HAP-1 (cell line): ENCODE measurements at regions of chr17 and their contacts with region 1.

Region 1: GRCh38 chr17:50547035-50547735 is at the start of gene SPATA20:
- DNase-seq: peak; percentile 84 to 95
- H3K4me3 ChIP-seq: peak within 1 kb of the TSS; percentile 44
- H3K4me1 ChIP-seq: peaks cover 13% of the 10 kb centered on the region
- H3K27me3 ChIP-seq: no peaks in the 10 kb centered on the region

Region 2: DNA sequence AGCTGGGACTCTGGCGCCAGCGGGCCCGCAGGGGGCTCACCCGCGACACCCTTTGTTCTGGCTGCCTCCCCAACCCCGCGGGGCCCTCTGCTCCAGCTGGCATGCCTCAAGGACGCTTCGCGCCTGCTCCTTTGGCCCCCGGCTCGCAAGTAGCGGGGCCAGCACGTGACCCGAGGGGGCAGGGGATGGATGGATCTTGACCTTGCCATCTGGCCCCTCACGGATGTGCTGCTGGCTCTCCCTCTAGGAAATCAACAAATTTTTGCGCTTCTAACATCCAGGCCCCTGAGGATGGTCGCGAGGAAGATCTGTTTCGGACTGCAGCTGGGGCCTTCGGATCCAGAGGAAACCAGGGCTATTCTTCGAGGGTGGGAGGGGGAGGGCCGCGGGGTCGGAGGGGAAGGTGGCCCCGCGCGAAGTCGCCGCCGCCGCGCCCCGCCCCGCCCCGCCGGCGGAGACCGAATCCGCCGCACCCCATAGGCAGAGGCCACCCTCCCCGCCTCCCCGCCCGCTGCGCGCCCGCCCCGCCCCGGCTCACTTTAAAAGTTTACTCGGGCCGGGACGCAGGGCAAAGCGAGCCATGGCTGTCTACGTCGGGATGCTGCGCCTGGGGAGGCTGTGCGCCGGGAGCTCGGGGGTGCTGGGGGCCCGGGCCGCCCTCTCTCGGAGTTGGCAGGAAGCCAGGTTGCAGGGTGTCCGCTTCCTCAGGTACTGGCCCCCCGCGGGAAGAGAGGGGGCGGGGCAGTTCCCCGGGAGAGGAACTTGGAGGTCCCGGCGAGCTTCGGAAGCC is 121.3 kb before region 1 on chr17 and contains the start of gene ACSF2:
- in situ Hi-C with region 1: no loop called
- DNase-seq: peak; percentile 56 to 84
- H3K4me3 ChIP-seq: peak within 1 kb of the TSS; percentile 62
- H3K4me1 ChIP-seq: peaks cover 11% of the 10 kb centered on the region; the same call in 1 of the 2 replicates
- H3K27me3 ChIP-seq: no peaks in the 10 kb centered on the region

Region 3: DNA sequence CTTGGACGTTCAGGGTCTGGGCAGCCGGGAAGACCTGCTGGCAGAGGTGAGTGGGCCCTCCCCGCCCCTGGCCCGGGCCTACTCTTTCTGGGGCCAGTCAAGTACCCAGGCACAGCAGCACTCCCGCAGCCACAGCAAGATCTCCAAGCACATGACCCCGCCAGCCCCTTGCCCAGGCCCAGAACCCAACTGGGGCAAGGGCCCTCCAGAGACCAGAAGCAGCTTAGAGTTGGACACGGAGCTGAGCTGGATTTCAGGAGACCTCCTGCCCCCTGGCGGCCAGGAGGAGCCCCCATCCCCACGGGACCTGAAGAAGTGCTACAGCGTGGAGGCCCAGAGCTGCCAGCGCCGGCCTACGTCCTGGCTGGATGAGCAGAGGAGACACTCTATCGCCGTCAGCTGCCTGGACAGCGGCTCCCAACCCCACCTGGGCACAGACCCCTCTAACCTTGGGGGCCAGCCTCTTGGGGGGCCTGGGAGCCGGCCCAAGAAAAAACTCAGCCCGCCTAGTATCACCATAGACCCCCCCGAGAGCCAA is 78.9 kb after region 1 on chr17:
- in situ Hi-C with region 1: loop called (anchors 5 kb)
- DNase-seq: peak; percentile 76 to 89
- H3K4me3 ChIP-seq: no peak overlapping the region
- H3K4me1 ChIP-seq: no peaks in the 10 kb centered on the region
- H3K27me3 ChIP-seq: peaks cover 4% of the 10 kb centered on the region

Region 4: DNA sequence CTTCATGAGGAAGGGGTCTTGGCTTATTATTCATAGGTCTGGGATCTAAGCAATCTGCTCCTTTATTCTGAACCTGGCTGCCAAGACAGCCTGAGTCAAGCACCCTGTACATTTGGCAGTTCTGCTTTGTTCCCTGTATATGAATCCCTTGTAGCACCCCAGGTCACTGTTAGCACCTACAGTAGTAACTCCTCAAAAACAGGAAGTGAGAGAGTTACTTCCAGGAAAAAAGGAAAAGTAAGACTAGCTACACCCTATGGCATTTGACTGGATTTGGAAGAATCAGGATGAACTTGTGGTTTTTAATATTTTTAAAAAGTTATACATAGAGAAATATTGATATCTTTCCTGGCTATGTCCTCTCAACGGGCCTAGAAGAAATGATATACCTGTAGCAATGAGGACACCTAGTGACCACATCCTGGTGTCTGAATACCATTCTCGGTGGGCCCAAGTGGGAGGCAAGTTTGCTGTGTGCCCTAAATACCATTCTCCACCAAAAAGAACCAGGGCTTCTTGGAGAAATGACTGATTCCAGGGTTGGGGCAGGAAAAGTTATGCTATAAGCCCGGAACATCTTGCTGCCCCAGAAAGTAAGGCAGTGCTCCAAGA is 150.6 kb after region 1 on chr17:
- in situ Hi-C with region 1: loop called (anchors 5 kb)
- DNase-seq: no peak
- H3K4me3 ChIP-seq: no peak overlapping the region
- H3K4me1 ChIP-seq: no peaks in the 10 kb centered on the region
- H3K27me3 ChIP-seq: no peaks in the 10 kb centered on the region

Region 5: GRCh38 chr17:50841949-50842354 is 294.8 kb after region 1 on chr17:
- in situ Hi-C with region 1: loop called (anchors 5 kb)
- DNase-seq: peak; percentile 73 to 83
- H3K4me3 ChIP-seq: no peak overlapping the region
- H3K4me1 ChIP-seq: no peaks in the 10 kb centered on the region
- H3K27me3 ChIP-seq: no peaks in the 10 kb centered on the region

Region 6: DNA sequence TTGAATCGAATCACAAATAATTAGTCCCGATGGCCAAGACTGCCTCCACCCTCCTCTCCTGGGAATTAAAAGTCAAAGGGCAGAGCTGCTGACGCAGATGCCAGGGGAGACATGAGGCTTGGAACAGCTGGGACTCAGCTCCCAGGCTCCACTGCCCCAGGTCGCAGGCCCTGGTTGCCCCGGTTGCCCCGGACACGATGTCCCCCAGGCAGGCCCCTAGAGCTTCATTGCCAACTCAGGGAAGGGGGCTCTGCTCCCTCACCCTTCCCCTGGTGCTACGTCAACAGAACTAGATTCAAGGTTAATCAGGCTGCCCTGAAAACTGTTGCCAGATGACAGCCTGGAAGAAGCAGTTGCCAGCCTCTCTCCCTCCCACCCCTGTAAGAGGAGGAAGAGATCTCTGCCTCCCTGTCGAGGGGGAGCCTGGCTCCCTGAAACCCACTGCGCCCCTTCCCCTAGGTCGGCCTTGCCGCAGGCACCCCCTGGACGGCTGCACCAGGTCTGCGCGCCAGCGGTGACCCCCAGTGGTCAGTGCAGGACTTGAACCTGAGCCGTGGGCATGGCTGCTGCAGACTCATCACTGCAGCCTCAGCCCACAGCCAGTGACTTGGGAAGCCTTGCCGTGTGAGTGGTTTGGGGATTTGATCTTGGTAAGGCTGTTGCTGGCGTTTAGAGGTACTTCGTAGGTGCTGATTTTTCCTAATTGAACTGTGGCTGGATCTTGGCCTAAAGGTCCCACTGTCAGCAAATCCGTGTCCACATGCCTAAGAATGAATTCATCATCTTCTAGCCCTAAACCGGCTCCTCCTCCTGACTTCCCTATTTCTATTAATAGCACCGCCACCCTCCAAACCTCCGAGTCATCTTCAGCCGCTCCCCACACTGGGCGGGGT is 403.1 kb after region 1 on chr17:
- in situ Hi-C with region 1: loop called (anchors 10 kb)
- DNase-seq: peak in 1 of 2 experiments; percentile 74
- H3K4me3 ChIP-seq: no peak overlapping the region
- H3K4me1 ChIP-seq: peaks cover 3% of the 10 kb centered on the region; the same call in 1 of the 2 replicates
- H3K27me3 ChIP-seq: no peaks in the 10 kb centered on the region

Region 7: GRCh38 chr17:51164911-51165679 is 617.9 kb after region 1 on chr17:
- in situ Hi-C with region 1: no loop called
- DNase-seq: peak in 1 of 2 experiments; percentile 47
- H3K4me3 ChIP-seq: peak overlapping the region; percentile 94
- H3K4me1 ChIP-seq: peaks cover 13% of the 10 kb centered on the region
- H3K27me3 ChIP-seq: no peaks in the 10 kb centered on the region